Posterior cingulate gyrus (tissue), 11 donors: ENCODE measurements at regions of chr10 and their contacts with region 1.

Region 1: GRCh38 chr10:18260310-18260922 is 120.2 kb downstream of the CACNB2 start:
- DNase-seq: peak in 5 of 10 donors; percentile 21 to 91 (median 33)

Region 2: DNA sequence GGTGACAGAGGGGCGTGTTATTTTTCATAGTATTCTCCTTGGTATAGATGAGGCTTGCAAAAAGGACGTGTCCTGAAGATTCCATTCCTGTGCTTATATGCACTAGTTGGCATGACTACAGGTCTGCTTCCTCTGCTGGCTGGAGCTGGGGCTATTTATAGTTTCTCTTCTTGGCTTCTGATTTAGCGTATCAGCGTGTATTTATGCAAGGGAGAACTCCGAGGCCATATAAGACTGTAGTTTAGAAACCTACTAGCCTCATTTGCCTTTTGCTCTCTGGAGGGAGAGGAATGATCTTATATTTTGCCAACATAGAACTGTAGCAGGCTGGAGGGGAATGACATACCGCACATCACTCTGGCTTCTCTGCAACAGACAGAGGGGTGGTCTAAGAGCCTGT is 80.5 kb before region 1 on chr10:
- intact Hi-C with region 1: no loop called
- DNase-seq: no peak

Region 3: DNA sequence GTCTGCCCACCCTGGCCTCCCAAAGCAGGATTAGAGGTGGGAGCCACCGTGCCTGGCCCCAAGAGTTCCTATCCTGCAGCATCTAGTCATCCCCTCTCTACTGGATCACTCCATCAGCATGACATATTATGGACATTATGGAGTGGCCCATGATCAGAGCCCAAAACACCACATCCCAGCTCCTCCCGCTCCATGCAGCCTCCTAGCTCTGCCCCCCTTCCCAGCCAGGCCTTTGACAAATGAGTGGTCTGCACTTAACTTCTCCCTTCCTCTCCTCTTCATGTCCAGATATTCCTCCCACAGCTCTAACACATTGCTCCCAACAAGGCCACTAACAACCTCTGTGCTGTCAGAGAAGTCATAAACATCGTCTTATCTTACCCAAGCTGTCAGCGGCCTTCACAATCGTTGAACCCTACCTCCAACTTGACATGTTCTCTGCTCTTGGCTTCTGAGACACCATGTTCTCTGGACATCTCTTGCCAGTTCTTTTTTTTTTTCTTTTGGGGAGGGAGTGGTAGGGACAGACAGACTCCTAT is 203.3 kb after region 1 on chr10:
- intact Hi-C with region 1: loop called (anchors 10 kb)
- DNase-seq: no peak